Mucosa of descending colon (tissue), 3 donors: ENCODE measurements at regions of chr12 and their contacts with region 1.

Region 1: DNA sequence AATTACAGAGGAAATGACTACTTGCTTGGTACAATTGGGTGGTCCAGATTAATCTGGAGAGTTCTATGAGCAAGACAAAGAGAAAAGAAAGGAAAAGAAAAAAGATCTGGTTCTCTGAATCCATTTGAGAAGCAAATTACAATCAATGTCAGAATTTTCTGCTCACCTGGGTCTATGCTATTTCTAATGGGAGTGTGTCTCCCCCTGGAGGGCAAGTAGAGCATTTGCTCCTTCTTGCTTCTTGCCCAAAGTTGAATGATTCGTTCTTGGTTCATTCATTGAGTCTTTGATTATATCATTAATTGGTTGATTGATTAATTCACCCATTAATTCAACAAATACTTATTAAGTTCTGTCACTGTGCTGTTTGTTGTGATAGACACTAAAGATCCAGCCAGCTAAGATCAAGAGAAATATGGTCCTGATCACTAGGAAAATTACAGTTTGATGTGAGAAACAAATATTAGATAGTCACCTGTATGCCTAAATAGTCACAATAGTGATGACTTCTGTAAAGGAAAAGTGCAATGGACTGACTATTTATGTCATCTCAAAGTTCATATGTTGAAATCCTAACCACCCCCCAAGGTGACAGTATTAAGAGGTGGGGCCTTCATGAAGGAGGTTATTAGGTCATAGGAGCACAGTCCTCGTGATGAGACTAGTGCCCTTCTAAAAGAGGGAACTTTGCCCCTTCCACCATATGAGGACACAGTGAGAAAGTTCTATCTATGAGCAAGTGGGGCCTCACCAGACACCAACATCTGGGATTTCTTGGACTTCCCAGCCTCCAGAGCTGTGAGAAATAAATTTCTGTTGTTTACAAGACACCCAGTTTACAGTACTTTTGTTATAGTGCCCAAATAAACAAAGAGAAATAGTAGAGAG is 8.0 kb upstream of the ASB8 start:
- DNase-seq: peak in 1 of 3 donors; percentile 23
- ATAC-seq: peak; percentile 67
- H3K4me3 ChIP-seq: no peak overlapping the region
- H3K4me1 ChIP-seq: no peaks in the 10 kb centered on the region
- CTCF ChIP-seq: peak; percentile 84

Region 2: GRCh38 chr12:48084066-48084465 is 81.3 kb before region 1 on chr12:
- intact Hi-C with region 1: loop called in 1 of 2 experiments (anchors 10 kb)
- DNase-seq: no peak
- ATAC-seq: no peak
- H3K4me3 ChIP-seq: no peak overlapping the region
- H3K4me1 ChIP-seq: no peaks in the 10 kb centered on the region
- CTCF ChIP-seq: no peak